ENCODE measurements at regions of chr1 and their contacts with region 1.

Region 1: GRCh38 chr1:197180252-197180878 is 33.9 kb upstream of the ASPM start:
- DNase-seq: peak; percentile 50
- ATAC-seq: no peak
- H3K4me3 ChIP-seq: no peak overlapping the region
- H3K4me3 Mint-ChIP-seq: no peak overlapping the region
- H3K27ac ChIP-seq: no peak overlapping the region
- H3K27ac Mint-ChIP-seq: no peak overlapping the region
- H3K4me1 ChIP-seq: peaks cover 9 to 11% of the 10 kb centered on the region in 2 donors
- H3K4me1 Mint-ChIP-seq: peaks cover 21% of the 10 kb centered on the region
- H3K27me3 ChIP-seq: no peaks in the 10 kb centered on the region
- H3K27me3 Mint-ChIP-seq: no peaks in the 10 kb centered on the region
- CTCF ChIP-seq: peak; percentile 77

Region 2: DNA sequence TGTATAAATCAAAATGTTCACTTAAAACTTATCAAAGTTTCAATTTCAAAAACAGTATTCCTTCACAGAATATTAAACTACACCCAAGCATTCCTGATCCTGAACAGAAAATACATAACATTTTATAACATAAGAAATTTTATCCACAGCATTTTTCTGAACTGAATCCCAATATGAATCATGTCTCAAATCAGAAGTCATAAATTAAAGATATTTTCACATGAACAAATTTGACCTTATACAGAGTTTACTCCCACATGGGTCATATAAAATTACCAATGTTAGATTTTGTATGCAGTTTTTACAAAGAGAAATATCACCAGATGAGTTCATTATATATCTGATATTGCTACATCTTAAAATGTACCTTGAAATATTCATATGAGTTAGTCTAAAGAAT is 14.7 kb after region 1 on chr1:
- CTCF ChIA-PET with region 1: interaction called, 25 read pairs
- POLR2A ChIA-PET with region 1: no interaction called
- intact Hi-C with region 1: loop called (anchors 1 kb)
- DNase-seq: no peak
- ATAC-seq: no peak
- H3K4me3 ChIP-seq: no peak overlapping the region
- H3K4me3 Mint-ChIP-seq: no peak overlapping the region
- H3K27ac ChIP-seq: no peak overlapping the region
- H3K27ac Mint-ChIP-seq: no peak overlapping the region
- H3K4me1 ChIP-seq: peaks cover 8 to 30% of the 10 kb centered on the region in 2 donors
- H3K4me1 Mint-ChIP-seq: peaks cover 51% of the 10 kb centered on the region
- H3K27me3 ChIP-seq: no peaks in the 10 kb centered on the region
- H3K27me3 Mint-ChIP-seq: no peaks in the 10 kb centered on the region
- CTCF ChIP-seq: no peak

Region 3: GRCh38 chr1:197327776-197328364 is 147.5 kb after region 1 on chr1:
- CTCF ChIA-PET with region 1: interaction called, 19 read pairs
- POLR2A ChIA-PET with region 1: no interaction called
- intact Hi-C with region 1: no loop called
- DNase-seq: no peak
- ATAC-seq: no peak
- H3K4me3 ChIP-seq: no peak overlapping the region
- H3K4me3 Mint-ChIP-seq: no peak overlapping the region
- H3K27ac ChIP-seq: no peak overlapping the region
- H3K27ac Mint-ChIP-seq: no peak overlapping the region
- H3K4me1 ChIP-seq: no peaks in the 10 kb centered on the region
- H3K4me1 Mint-ChIP-seq: no peaks in the 10 kb centered on the region
- H3K27me3 ChIP-seq: no peaks in the 10 kb centered on the region
- H3K27me3 Mint-ChIP-seq: peaks cover 19% of the 10 kb centered on the region
- CTCF ChIP-seq: peak; percentile 56

Region 4: GRCh38 chr1:197356723-197357533 is 176.6 kb after region 1 on chr1:
- CTCF ChIA-PET with region 1: interaction called, 104 read pairs
- POLR2A ChIA-PET with region 1: no interaction called
- intact Hi-C with region 1: no loop called
- DNase-seq: peak; percentile 46
- ATAC-seq: no peak
- H3K4me3 ChIP-seq: no peak overlapping the region
- H3K4me3 Mint-ChIP-seq: no peak overlapping the region
- H3K27ac ChIP-seq: no peak overlapping the region
- H3K27ac Mint-ChIP-seq: no peak overlapping the region
- H3K4me1 ChIP-seq: peaks cover 0 to under 1% of the 10 kb centered on the region in 2 donors
- H3K4me1 Mint-ChIP-seq: no peaks in the 10 kb centered on the region
- H3K27me3 ChIP-seq: no peaks in the 10 kb centered on the region
- H3K27me3 Mint-ChIP-seq: no peaks in the 10 kb centered on the region
- CTCF ChIP-seq: peak; percentile 70

Region 5: GRCh38 chr1:197526736-197527371 is 346.5 kb after region 1 on chr1:
- CTCF ChIA-PET with region 1: interaction called, 4 read pairs
- POLR2A ChIA-PET with region 1: no interaction called
- intact Hi-C with region 1: loop called (anchors 5 kb)
- DNase-seq: peak; percentile 48
- ATAC-seq: no peak
- H3K4me3 ChIP-seq: no peak overlapping the region
- H3K4me3 Mint-ChIP-seq: no peak overlapping the region
- H3K27ac ChIP-seq: no peak overlapping the region
- H3K27ac Mint-ChIP-seq: no peak overlapping the region
- H3K4me1 ChIP-seq: no peaks in the 10 kb centered on the region
- H3K4me1 Mint-ChIP-seq: no peaks in the 10 kb centered on the region
- H3K27me3 ChIP-seq: no peaks in the 10 kb centered on the region
- H3K27me3 Mint-ChIP-seq: no peaks in the 10 kb centered on the region
- CTCF ChIP-seq: peak; percentile 87

Region 6: DNA sequence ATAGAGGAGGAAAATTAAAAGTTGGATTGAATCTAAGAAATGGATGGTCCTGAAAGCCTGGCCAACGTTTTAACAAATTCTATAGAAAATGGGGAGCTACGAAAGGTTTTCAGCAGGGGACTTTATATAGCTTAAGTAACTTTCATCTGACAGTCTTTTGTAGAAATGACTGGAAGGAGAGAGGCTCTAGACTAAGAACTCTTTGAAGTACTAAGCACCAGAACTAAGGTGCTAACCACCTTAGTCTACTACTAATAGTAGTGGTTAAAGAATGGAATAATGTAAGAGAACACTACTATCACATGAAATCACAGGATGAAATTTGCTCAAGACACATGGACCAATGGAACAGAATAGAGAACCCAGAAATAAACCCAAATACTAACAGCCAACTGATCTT is 468.8 kb after region 1 on chr1:
- CTCF ChIA-PET with region 1: no interaction called
- POLR2A ChIA-PET with region 1: no interaction called
- intact Hi-C with region 1: no loop called
- DNase-seq: no peak
- ATAC-seq: no peak
- H3K4me3 ChIP-seq: no peak overlapping the region
- H3K4me3 Mint-ChIP-seq: no peak overlapping the region
- H3K27ac ChIP-seq: no peak overlapping the region
- H3K27ac Mint-ChIP-seq: no peak overlapping the region
- H3K4me1 ChIP-seq: no peaks in the 10 kb centered on the region
- H3K4me1 Mint-ChIP-seq: no peaks in the 10 kb centered on the region
- H3K27me3 ChIP-seq: no peaks in the 10 kb centered on the region
- H3K27me3 Mint-ChIP-seq: no peaks in the 10 kb centered on the region
- CTCF ChIP-seq: no peak

Region 7: GRCh38 chr1:198734323-198735008 is 1554.1 kb after region 1 on chr1:
- CTCF ChIA-PET with region 1: no interaction called
- POLR2A ChIA-PET with region 1: no interaction called
- intact Hi-C with region 1: loop called (anchors 10 kb)
- DNase-seq: no peak
- ATAC-seq: no peak
- H3K4me3 ChIP-seq: no peak overlapping the region
- H3K4me3 Mint-ChIP-seq: no peak overlapping the region
- H3K27ac ChIP-seq: peak overlapping the region in 1 of 2 donors; percentile 34
- H3K27ac Mint-ChIP-seq: no peak overlapping the region
- H3K4me1 ChIP-seq: no peaks in the 10 kb centered on the region
- H3K4me1 Mint-ChIP-seq: peaks cover 10% of the 10 kb centered on the region
- H3K27me3 ChIP-seq: no peaks in the 10 kb centered on the region
- H3K27me3 Mint-ChIP-seq: no peaks in the 10 kb centered on the region
- CTCF ChIP-seq: no peak

Measured in B cell (primary cell).